Endothelial cell of umbilical vein (primary cell): ENCODE measurements at regions of chr18 and their contacts with region 1.

Region 1: GRCh38 chr18:323253-323622 is 55.4 kb upstream of the THOC1 start:
- DNase-seq: peak; percentile 62
- H3K4me3 ChIP-seq: no peak overlapping the region
- H3K27ac ChIP-seq: peak overlapping the region; percentile 29
- H3K4me1 ChIP-seq: peaks cover 30% of the 10 kb centered on the region
- H3K27me3 ChIP-seq: no peaks in the 10 kb centered on the region
- CTCF ChIP-seq: no peak
- POLR2A ChIP-seq: no peak

Region 2: GRCh38 chr18:286515-287310 is 36.5 kb before region 1 on chr18:
- CTCF ChIA-PET with region 1: no interaction called
- POLR2A ChIA-PET with region 1: no interaction called
- dilution Hi-C with region 1: no loop called
- intact Hi-C with region 1: loop called (anchors 2 kb)
- DNase-seq: peak; percentile 67
- H3K4me3 ChIP-seq: no peak overlapping the region
- H3K27ac ChIP-seq: no peak overlapping the region
- H3K4me1 ChIP-seq: no peaks in the 10 kb centered on the region
- H3K27me3 ChIP-seq: peaks cover 0 to 3% of the 10 kb centered on the region in 2 experiments
- CTCF ChIP-seq: peak; percentile 38 to 39
- POLR2A ChIP-seq: no peak

Region 3: DNA sequence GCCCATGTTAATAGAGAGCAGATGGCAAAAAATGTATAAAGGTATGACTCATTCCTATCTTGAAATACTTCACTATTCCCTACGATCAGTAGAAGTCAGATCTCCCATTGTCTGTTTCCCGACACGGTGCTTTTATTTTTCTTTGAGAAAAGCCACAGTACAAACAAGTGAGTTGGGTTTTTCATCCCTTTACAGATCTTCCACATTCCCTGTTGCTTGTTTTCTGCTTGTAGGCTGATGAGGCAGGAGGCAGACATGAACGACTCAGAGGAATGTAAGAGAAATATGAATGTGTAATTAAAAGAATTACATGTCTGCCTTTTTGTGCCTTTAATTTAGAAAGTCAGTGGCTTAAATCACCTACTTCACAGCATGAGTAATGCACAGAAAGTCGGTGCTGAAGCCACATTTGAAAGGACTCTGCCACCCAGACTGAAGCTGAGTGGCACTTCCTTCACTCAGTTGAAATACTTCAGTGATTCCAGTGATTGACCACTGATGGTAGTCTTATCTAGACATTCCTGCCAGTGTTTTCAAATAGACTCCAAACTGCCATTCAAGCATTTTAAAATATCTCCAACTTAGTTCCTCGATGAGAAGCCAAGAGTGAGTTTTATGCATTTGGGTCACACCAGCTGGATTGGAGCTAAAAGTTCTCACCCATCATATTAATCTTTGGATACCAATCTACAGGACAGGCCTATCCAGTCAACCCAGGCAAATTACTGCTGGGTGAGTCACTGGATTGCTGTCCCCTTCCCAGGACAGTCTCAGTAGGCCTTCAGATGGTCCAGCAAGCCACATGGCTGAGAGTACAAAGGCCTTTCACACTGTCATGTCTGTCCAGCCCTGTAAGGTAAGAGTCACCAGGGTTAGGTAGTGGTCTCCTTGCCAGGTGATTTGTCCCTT is 98.3 kb after region 1 on chr18:
- CTCF ChIA-PET with region 1: interaction called, 3 read pairs
- POLR2A ChIA-PET with region 1: no interaction called
- dilution Hi-C with region 1: no loop called
- intact Hi-C with region 1: loop called (anchors 5 kb)
- DNase-seq: peak; percentile 60
- H3K4me3 ChIP-seq: no peak overlapping the region
- H3K27ac ChIP-seq: peak overlapping the region; percentile 22
- H3K4me1 ChIP-seq: peaks cover 35% of the 10 kb centered on the region
- H3K27me3 ChIP-seq: no peaks in the 10 kb centered on the region
- CTCF ChIP-seq: no peak
- POLR2A ChIP-seq: no peak

Region 4: DNA sequence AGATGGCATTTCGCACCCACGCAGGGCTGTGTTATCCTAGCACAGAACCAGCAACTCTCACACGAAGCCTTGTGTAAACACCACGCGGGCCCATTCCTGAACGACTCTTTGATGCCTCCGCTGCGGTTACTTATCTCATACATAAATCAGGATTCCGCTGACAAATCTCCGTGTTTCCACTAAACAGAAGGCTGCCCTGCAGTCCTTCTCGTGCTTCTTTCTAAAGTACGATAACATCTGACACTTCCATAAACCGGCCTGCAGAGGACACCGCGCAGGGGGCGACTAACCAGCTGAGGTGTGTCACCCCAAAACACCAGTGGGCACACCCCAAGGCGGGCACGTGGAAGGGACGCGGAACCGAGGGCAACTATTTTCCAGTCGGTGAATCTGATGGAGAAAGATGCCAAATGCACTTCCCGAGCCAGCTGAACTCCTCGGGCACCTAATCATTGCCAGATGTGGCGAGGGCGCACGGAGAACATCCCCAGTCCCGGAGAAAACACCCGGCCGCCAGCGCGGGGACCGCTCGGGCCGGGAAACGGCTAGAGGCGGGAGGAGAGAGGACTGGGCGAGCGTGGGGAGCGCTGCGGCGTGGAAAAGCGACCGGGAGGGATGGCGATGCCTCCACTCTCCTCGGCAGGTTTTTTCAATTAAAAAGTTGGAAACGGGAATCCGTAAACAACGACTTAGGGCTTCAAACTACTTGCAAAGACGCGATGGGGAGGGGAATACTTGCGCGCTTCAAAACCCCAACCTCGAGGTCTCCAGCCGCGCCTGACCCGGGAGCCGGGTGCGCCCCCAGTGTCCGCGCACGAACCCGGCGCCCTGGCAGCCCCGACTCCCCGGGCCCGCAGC is 176.5 kb after region 1 on chr18:
- CTCF ChIA-PET with region 1: no interaction called
- POLR2A ChIA-PET with region 1: no interaction called
- dilution Hi-C with region 1: no loop called
- intact Hi-C with region 1: loop called (anchors 5 kb)
- DNase-seq: peak; percentile 57
- H3K4me3 ChIP-seq: peak overlapping the region; percentile 5 to 58 (median 38)
- H3K27ac ChIP-seq: no peak overlapping the region
- H3K4me1 ChIP-seq: peaks cover 13% of the 10 kb centered on the region
- H3K27me3 ChIP-seq: peaks cover 3 to 15% of the 10 kb centered on the region in 2 experiments
- CTCF ChIP-seq: peak in 1 of 2 donors; percentile 13
- POLR2A ChIP-seq: no peak